ENCODE measurements at regions of chr17 and their contacts with region 1.

Region 1: GRCh38 chr17:78923660-78924453 is 1.3 kb downstream of the TIMP2 start:
- DNase-seq: peak; percentile 75
- H3K4me3 ChIP-seq: peak overlapping the region; percentile 49 to 58
- H3K27ac ChIP-seq: peak overlapping the region; percentile 88 to 90
- H3K4me1 ChIP-seq: peaks cover 6% of the 10 kb centered on the region
- H3K27me3 ChIP-seq: no peaks in the 10 kb centered on the region
- CTCF ChIP-seq: no peak
- POLR2A ChIP-seq: peak; percentile 42

Region 2: GRCh38 chr17:78883164-78884122 is 40.4 kb before region 1 on chr17:
- intact Hi-C with region 1: loop called (anchors 5 kb)
- DNase-seq: peak; percentile 43
- H3K4me3 ChIP-seq: peak overlapping the region in 1 of 2 donors; percentile 1
- H3K27ac ChIP-seq: peak overlapping the region; percentile 74 to 82
- H3K4me1 ChIP-seq: peaks cover 6% of the 10 kb centered on the region
- H3K27me3 ChIP-seq: no peaks in the 10 kb centered on the region
- CTCF ChIP-seq: peak in 1 of 4 experiments; percentile 3
- POLR2A ChIP-seq: peak; percentile 12

Region 3: GRCh38 chr17:79104898-79105600 is 181.2 kb after region 1 on chr17:
- intact Hi-C with region 1: no loop called
- DNase-seq: no peak
- H3K4me3 ChIP-seq: no peak overlapping the region
- H3K27ac ChIP-seq: no peak overlapping the region
- H3K4me1 ChIP-seq: no peaks in the 10 kb centered on the region
- H3K27me3 ChIP-seq: peaks cover 23% of the 10 kb centered on the region
- CTCF ChIP-seq: no peak
- POLR2A ChIP-seq: no peak

Measured in prostate gland (tissue), 2 donors.